Transverse colon (tissue), 4 donors: ENCODE measurements at regions of chr2 and their contacts with region 1.

Region 1: GRCh38 chr2:196149948-196150347 is 21.4 kb downstream of the STK17B start:
- DNase-seq: no peak
- H3K4me3 ChIP-seq: no peak overlapping the region
- H3K27ac ChIP-seq: no peak overlapping the region
- H3K4me1 ChIP-seq: no peaks in the 10 kb centered on the region
- H3K27me3 ChIP-seq: no peaks in the 10 kb centered on the region
- CTCF ChIP-seq: no peak
- EP300 ChIP-seq: no peak
- POLR2A ChIP-seq: no peak

Region 2: GRCh38 chr2:195769975-195770374 is 380.0 kb before region 1 on chr2:
- in situ Hi-C with region 1: no loop called
- intact Hi-C with region 1: loop called (anchors 5 kb)
- DNase-seq: no peak
- H3K4me3 ChIP-seq: no peak overlapping the region
- H3K27ac ChIP-seq: no peak overlapping the region
- H3K4me1 ChIP-seq: no peaks in the 10 kb centered on the region
- H3K27me3 ChIP-seq: no peaks in the 10 kb centered on the region
- CTCF ChIP-seq: no peak
- EP300 ChIP-seq: no peak
- POLR2A ChIP-seq: no peak

Region 3: GRCh38 chr2:197515739-197516392 is 1365.9 kb after region 1 on chr2 and contains the start of gene MOB4:
- in situ Hi-C with region 1: no loop called
- intact Hi-C with region 1: no loop called
- DNase-seq: peak; percentile 96
- H3K4me3 ChIP-seq: peak within 1 kb of the TSS; percentile 73 to 91 (median 80)
- H3K27ac ChIP-seq: peak within 1 kb of the TSS; percentile 93 to 95 (median 94)
- H3K4me1 ChIP-seq: peaks cover 9 to 27% (median 21%) of the 10 kb centered on the region in 4 donors
- H3K27me3 ChIP-seq: no peaks in the 10 kb centered on the region
- CTCF ChIP-seq: peak in 1 of 5 experiments; percentile 19
- EP300 ChIP-seq: no peak
- POLR2A ChIP-seq: peak; percentile 93
- total RNA-seq, gene MOB4: 12.3 to 27.9 (median 25.3) TPM